Spleen (tissue), 13 donors: ENCODE measurements at regions of chr1 and their contacts with region 1.

Region 1: GRCh38 chr1:169059421-169059820 is 47.1 kb upstream of the ATP1B1 start:
- DNase-seq: no peak
- H3K4me3 ChIP-seq: no peak overlapping the region
- H3K27ac ChIP-seq: peak overlapping the region in 1 of 8 donors; percentile 64
- H3K4me1 ChIP-seq: peaks cover 0 to 11% (median 3%) of the 10 kb centered on the region in 6 donors
- H3K27me3 ChIP-seq: peaks cover 0 to 4% (median 0%) of the 10 kb centered on the region in 7 donors
- CTCF ChIP-seq: no peak
- POLR2A ChIP-seq: no peak

Region 2: GRCh38 chr1:169106095-169106920 is 46.9 kb after region 1 on chr1 and contains the start of gene ATP1B1:
- intact Hi-C with region 1: loop called (anchors 5 kb)
- DNase-seq: peak; percentile 94
- H3K4me3 ChIP-seq: peak within 1 kb of the TSS; percentile 73 to 92 (median 86)
- H3K27ac ChIP-seq: peak within 1 kb of the TSS; percentile 66 to 91 (median 82)
- H3K4me1 ChIP-seq: peaks cover 7 to 86% (median 41%) of the 10 kb centered on the region in 6 donors
- H3K27me3 ChIP-seq: peaks cover 0 to 70% (median 8%) of the 10 kb centered on the region in 7 donors
- CTCF ChIP-seq: peak in 10 of 11 experiments; percentile 38 to 87 (median 70)
- POLR2A ChIP-seq: peak in 2 of 3 donors; percentile 43 to 97
- total RNA-seq, gene ATP1B1: 42.1 to 101 (median 66.2) TPM

Region 3: GRCh38 chr1:169367486-169368405 is 308.3 kb after region 1 on chr1 and contains the starts of genes BLZF1 and NME7:
- intact Hi-C with region 1: no loop called
- DNase-seq: peak; percentile 99
- H3K4me3 ChIP-seq: peak within 1 kb of the TSS; percentile 50 to 90 (median 76)
- H3K27ac ChIP-seq: peak within 1 kb of the TSS; percentile 17 to 92 (median 84)
- H3K4me1 ChIP-seq: peaks cover 12 to 70% (median 41%) of the 10 kb centered on the region in 6 donors
- H3K27me3 ChIP-seq: no peaks in the 10 kb centered on the region
- CTCF ChIP-seq: peak in 1 of 11 experiments; percentile 35
- POLR2A ChIP-seq: no peak
- total RNA-seq, gene BLZF1: 16.9 to 33.8 (median 23.0) TPM
- total RNA-seq, gene NME7: 7.6 to 22.0 (median 13.2) TPM